BJ (cell line): ENCODE measurements at regions of chr6 and their contacts with region 1.

Region 1: GRCh38 chr6:29964887-29965562 is 22.7 kb downstream of the HLA-A start:
- DNase-seq: no peak
- H3K4me3 ChIP-seq: peak overlapping the region; percentile 20
- H3K27me3 ChIP-seq: no peaks in the 10 kb centered on the region
- CTCF ChIP-seq: no peak

Region 2: GRCh38 chr6:29887819-29888776 is 76.9 kb before region 1 on chr6:
- CTCF ChIA-PET with region 1: no interaction called
- POLR2A ChIA-PET with region 1: no interaction called
- DNase-seq: no peak
- H3K4me3 ChIP-seq: peak overlapping the region; percentile 65
- H3K27me3 ChIP-seq: no peaks in the 10 kb centered on the region
- CTCF ChIP-seq: no peak

Region 3: GRCh38 chr6:29976588-29977424 is 11.8 kb after region 1 on chr6:
- CTCF ChIA-PET with region 1: interaction called, 6 read pairs
- POLR2A ChIA-PET with region 1: interaction called, 10 read pairs
- DNase-seq: no peak
- H3K4me3 ChIP-seq: peak overlapping the region; percentile 52
- H3K27me3 ChIP-seq: peaks cover 12% of the 10 kb centered on the region
- CTCF ChIP-seq: peak; percentile 53